ENCODE measurements at regions of chr14 and their contacts with region 1.

Region 1: GRCh38 chr14:70714055-70714621 is 72.4 kb downstream of the TTC9 start:
- DNase-seq: peak in 1 of 2 experiments; percentile 59
- H3K4me3 ChIP-seq: no peak overlapping the region
- H3K4me3 Mint-ChIP-seq: no peak overlapping the region
- H3K27ac Mint-ChIP-seq: no peak overlapping the region
- H3K4me1 ChIP-seq: peaks cover 47% of the 10 kb centered on the region
- H3K4me1 Mint-ChIP-seq: peaks cover 34% of the 10 kb centered on the region
- H3K27me3 ChIP-seq: no peaks in the 10 kb centered on the region
- H3K27me3 Mint-ChIP-seq: no peaks in the 10 kb centered on the region
- CTCF ChIP-seq: peak in 1 of 2 experiments; percentile 48

Region 2: DNA sequence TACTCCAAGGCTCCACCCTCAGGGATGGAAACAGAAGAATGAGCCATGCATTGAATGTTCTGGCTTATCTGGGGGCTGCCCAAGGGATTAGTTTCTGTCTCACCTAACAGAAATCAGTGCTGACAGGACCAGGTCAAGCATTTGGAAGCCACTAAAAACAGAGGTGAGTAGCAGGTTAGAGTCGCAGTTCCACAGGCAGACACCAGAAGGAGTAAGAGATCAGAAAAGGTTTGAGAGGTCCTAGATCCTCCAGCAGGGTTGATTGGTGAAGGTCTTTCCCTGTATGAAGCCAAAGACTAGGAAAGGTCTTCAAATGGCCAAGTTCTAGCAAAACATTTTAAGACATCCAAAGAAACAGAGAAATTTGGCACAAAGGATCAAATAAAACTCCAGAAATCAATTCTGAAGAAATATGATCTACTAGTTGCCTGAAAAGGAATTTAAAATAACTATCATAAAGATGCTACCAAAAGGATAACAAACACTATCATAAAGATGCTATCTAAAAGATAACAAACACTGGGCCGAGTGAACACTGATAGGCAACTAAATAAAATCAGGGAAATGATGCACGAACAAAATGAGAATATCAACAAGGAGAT is 91.9 kb before region 1 on chr14:
- CTCF ChIA-PET with region 1: interaction called, 6 read pairs
- POLR2A ChIA-PET with region 1: no interaction called
- intact Hi-C with region 1: loop called (anchors 1 kb)
- DNase-seq: peak; percentile 68 to 79
- H3K4me3 ChIP-seq: no peak overlapping the region
- H3K4me3 Mint-ChIP-seq: no peak overlapping the region
- H3K27ac Mint-ChIP-seq: no peak overlapping the region
- H3K4me1 ChIP-seq: 0 out of 2 replicates have a peak, but pooled peaks cover 6% of the 10 kb centered on the region
- H3K4me1 Mint-ChIP-seq: peaks cover 6% of the 10 kb centered on the region
- H3K27me3 ChIP-seq: no peaks in the 10 kb centered on the region
- H3K27me3 Mint-ChIP-seq: peaks cover 1% of the 10 kb centered on the region
- CTCF ChIP-seq: peak; percentile 82

Region 3: GRCh38 chr14:70665191-70665916 is 48.8 kb before region 1 on chr14:
- CTCF ChIA-PET with region 1: no interaction called
- POLR2A ChIA-PET with region 1: no interaction called
- intact Hi-C with region 1: loop called (anchors 2 kb)
- DNase-seq: peak; percentile 83 to 85
- H3K4me3 ChIP-seq: no peak overlapping the region
- H3K4me3 Mint-ChIP-seq: peak overlapping the region; percentile 50
- H3K27ac Mint-ChIP-seq: peak overlapping the region; percentile 91
- H3K4me1 ChIP-seq: peaks cover 46% of the 10 kb centered on the region
- H3K4me1 Mint-ChIP-seq: peaks cover 34% of the 10 kb centered on the region
- H3K27me3 ChIP-seq: no peaks in the 10 kb centered on the region
- H3K27me3 Mint-ChIP-seq: no peaks in the 10 kb centered on the region
- CTCF ChIP-seq: no peak

Region 4: GRCh38 chr14:70809543-70810244 is 95.6 kb after region 1 on chr14:
- CTCF ChIA-PET with region 1: interaction called, 6 read pairs
- POLR2A ChIA-PET with region 1: interaction called, 11 read pairs
- intact Hi-C with region 1: loop called (anchors 2 kb)
- DNase-seq: peak; percentile 99
- H3K4me3 ChIP-seq: peak overlapping the region; percentile 96
- H3K4me3 Mint-ChIP-seq: no peak overlapping the region
- H3K27ac Mint-ChIP-seq: no peak overlapping the region
- H3K4me1 ChIP-seq: peaks cover 27% of the 10 kb centered on the region
- H3K4me1 Mint-ChIP-seq: peaks cover 6% of the 10 kb centered on the region
- H3K27me3 ChIP-seq: no peaks in the 10 kb centered on the region
- H3K27me3 Mint-ChIP-seq: no peaks in the 10 kb centered on the region
- CTCF ChIP-seq: no peak

Region 5: GRCh38 chr14:70934502-70935134 is 220.5 kb after region 1 on chr14:
- CTCF ChIA-PET with region 1: no interaction called
- POLR2A ChIA-PET with region 1: no interaction called
- intact Hi-C with region 1: no loop called
- DNase-seq: no peak
- H3K4me3 ChIP-seq: no peak overlapping the region
- H3K4me3 Mint-ChIP-seq: no peak overlapping the region
- H3K27ac Mint-ChIP-seq: no peak overlapping the region
- H3K4me1 ChIP-seq: no peaks in the 10 kb centered on the region
- H3K4me1 Mint-ChIP-seq: peaks cover 6% of the 10 kb centered on the region
- H3K27me3 ChIP-seq: no peaks in the 10 kb centered on the region
- H3K27me3 Mint-ChIP-seq: no peaks in the 10 kb centered on the region
- CTCF ChIP-seq: no peak

Region 6: DNA sequence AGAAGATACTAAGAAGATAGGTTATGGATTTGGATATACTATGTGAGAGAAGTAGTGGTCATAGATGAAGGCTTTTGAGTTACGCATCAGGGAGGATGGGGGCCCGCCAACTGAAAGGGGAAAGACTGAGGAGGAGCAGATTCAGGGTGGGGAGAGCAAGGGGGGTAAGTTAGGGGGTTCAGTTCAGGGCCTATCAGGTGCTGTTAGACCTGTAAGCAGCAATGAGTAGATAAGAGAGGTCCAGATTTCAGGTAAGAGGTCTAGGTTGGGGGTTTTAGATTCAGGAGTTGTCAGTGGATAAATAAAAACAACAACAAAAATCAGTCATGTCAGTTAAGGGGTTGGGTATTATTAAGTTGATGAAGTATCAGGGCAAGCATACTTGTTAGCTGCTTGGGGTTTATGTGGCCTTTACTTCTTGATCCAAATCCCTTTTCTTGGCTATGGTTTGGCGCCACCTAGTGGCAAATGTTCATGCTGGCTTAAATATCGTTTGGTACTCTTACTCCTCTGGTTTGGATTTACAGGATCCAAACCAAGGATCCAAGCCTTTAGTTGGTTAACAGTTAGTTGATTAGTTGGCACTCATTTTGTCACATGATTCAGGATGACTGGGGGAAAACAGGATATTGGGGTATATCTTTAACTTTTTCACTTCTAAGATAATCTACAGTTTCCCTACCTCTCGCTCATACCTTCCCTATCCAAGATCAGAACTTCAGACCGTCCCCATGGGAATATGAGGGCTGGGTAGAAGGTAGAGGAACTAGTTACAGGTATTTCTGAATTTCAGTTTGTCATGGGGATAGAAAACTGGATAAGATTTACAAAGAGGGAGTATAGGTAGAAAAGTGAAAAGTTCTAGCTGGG is 258.2 kb after region 1 on chr14:
- CTCF ChIA-PET with region 1: no interaction called
- POLR2A ChIA-PET with region 1: no interaction called
- intact Hi-C with region 1: no loop called
- DNase-seq: peak; percentile 77 to 79
- H3K4me3 ChIP-seq: no peak overlapping the region
- H3K4me3 Mint-ChIP-seq: no peak overlapping the region
- H3K27ac Mint-ChIP-seq: no peak overlapping the region
- H3K4me1 ChIP-seq: no peaks in the 10 kb centered on the region
- H3K4me1 Mint-ChIP-seq: no peaks in the 10 kb centered on the region
- H3K27me3 ChIP-seq: no peaks in the 10 kb centered on the region
- H3K27me3 Mint-ChIP-seq: no peaks in the 10 kb centered on the region
- CTCF ChIP-seq: peak; percentile 71 to 88

Region 7: DNA sequence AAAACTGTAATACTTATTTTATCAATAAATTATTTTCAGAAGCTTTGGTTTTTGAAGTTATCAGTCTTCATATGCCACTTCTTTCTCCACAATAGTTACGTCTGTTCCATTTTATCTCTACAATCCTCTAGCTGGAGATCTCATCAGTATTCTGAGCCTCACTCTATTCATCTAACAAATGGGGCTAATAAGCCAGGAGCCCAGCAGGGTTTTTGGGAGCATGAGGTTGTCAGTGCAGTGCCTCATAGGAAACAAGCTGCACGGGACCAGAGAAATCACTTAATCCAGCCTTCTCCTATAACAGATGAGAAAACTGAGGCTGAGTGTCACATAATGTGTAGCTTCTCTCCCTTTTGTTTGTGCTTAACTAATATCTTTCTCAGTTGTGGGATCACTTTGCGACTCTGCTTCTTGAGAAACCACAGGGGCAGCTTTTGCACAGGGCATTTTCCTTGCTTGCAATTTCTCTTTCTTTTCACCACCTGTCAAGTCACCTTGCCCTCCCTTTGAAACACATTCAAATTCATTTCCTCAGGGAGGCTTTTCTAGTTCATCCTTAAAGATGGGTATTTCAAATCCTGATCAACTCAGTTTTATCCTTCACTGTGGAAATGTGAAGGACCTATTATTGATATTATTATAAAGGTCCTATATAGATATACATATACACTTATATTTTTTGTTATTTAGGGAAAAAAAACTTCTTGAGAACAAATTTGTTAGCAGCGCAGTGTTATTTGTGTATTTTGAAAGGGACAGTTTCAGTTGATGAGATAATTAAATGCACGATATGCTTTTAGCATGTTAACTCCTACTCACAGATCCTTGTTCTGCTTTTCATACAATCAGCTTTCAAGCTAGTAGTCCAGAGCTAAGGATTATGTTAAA is 716.4 kb after region 1 on chr14:
- CTCF ChIA-PET with region 1: no interaction called
- POLR2A ChIA-PET with region 1: no interaction called
- intact Hi-C with region 1: no loop called
- DNase-seq: no peak
- H3K4me3 ChIP-seq: no peak overlapping the region
- H3K4me3 Mint-ChIP-seq: no peak overlapping the region
- H3K27ac Mint-ChIP-seq: no peak overlapping the region
- H3K4me1 ChIP-seq: no peaks in the 10 kb centered on the region
- H3K4me1 Mint-ChIP-seq: peaks cover 7% of the 10 kb centered on the region
- H3K27me3 ChIP-seq: no peaks in the 10 kb centered on the region
- H3K27me3 Mint-ChIP-seq: no peaks in the 10 kb centered on the region
- CTCF ChIP-seq: no peak

Measured in Caco-2 (cell line).